IMR-90 (cell line): ENCODE measurements at regions of chr3 and their contacts with region 1.

Region 1: GRCh38 chr3:46844881-46845312 is 18.3 kb downstream of the MYL3 start:
- DNase-seq: no peak
- ATAC-seq: no peak
- H3K4me3 ChIP-seq: no peak overlapping the region
- H3K27ac ChIP-seq: no peak overlapping the region
- H3K4me1 ChIP-seq: peaks cover 7% of the 10 kb centered on the region; the same call in 1 of the 2 replicates
- H3K27me3 ChIP-seq: no peaks in the 10 kb centered on the region; the same call in 1 of the 2 replicates
- CTCF ChIP-seq: no peak
- POLR2A ChIP-seq: no peak
- RAD21 ChIP-seq: no peak

Region 2: GRCh38 chr3:46578973-46579755 is 265.7 kb before region 1 on chr3:
- CTCF ChIA-PET with region 1: no interaction called
- POLR2A ChIA-PET with region 1: no interaction called
- dilution Hi-C with region 1: no loop called
- in situ Hi-C with region 1: no loop called
- intact Hi-C with region 1: no loop called
- DNase-seq: no peak
- ATAC-seq: no peak
- H3K4me3 ChIP-seq: no peak overlapping the region
- H3K27ac ChIP-seq: no peak overlapping the region
- H3K4me1 ChIP-seq: no peaks in the 10 kb centered on the region
- H3K27me3 ChIP-seq: peaks cover 22% of the 10 kb centered on the region
- CTCF ChIP-seq: no peak
- POLR2A ChIP-seq: no peak
- RAD21 ChIP-seq: no peak

Region 3: DNA sequence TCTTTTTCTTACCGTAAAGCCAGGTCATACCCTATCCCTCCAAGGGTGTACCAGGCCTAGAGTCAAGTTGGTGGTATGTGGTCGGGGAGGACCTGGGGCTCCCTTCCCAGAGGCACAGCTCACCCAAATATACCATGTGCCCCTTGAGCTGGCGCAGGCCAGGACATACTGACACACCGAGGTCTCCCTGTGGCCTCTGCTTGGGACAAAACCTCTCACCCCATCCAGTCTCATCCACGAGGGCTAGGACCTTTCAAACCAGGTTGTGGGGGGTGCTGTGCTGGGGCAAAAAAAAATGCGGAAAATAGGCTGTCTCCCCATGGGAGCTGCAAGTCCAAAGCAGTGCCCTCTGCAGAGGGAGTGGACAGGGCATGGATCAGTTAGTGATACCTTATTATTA is 55.5 kb after region 1 on chr3:
- CTCF ChIA-PET with region 1: no interaction called
- POLR2A ChIA-PET with region 1: interaction called, 11 read pairs
- dilution Hi-C with region 1: no loop called
- in situ Hi-C with region 1: no loop called
- intact Hi-C with region 1: no loop called
- DNase-seq: no peak
- ATAC-seq: no peak
- H3K4me3 ChIP-seq: no peak overlapping the region
- H3K27ac ChIP-seq: no peak overlapping the region
- H3K4me1 ChIP-seq: no peaks in the 10 kb centered on the region
- H3K27me3 ChIP-seq: peaks cover 11% of the 10 kb centered on the region
- CTCF ChIP-seq: no peak
- POLR2A ChIP-seq: no peak
- RAD21 ChIP-seq: no peak